Activated T-helper 1 cell treated with anti-CD3 and anti-CD28 coated beads, Interleukin-12 subunit alpha, Interleukin-12 subunit beta, Interleukin-2, Interleukin-4 antibody, amounts not matched to agents 30 ng/mL and 10 ng/mL and 1 ng/mL, durations not matched to agents 14 hours and 24 hours and 36 hours (primary cell): ENCODE measurements at regions of chr5 and their contacts with region 1.

Region 1: DNA sequence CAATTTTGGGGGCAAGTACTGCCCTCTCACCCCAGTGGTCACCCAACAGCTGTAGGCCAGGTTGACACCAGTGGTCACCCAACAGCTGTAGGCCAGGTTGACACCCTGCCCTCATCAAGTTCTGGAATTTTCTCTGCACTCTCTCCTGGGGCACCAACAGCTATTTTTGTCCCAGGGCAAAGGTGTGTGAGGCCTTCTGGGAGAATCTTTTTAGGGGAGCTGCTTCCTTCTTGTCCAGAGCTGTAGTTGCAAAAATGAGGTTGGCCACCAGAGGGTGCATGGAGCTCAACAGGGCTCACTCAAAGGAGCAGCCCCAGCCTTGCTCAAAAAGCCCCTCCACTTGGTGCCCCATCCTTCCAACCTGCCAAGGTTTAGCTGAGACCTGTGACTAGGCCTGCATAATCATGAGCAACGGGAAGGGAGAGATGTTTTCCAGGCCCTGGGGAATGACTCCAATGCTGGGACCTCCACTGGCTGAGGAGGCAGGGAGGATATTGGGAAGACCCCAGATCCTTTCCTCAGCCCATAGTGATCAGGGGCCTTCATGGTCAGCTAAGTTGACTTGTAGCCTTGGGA is 10.6 kb upstream of the P4HA2 start:
- DNase-seq: peak; percentile 59
- H3K4me3 Mint-ChIP-seq: no peak overlapping the region
- H3K27ac Mint-ChIP-seq: no peak overlapping the region
- H3K4me1 Mint-ChIP-seq: peaks cover 6% of the 10 kb centered on the region
- H3K27me3 Mint-ChIP-seq: peaks cover 4% of the 10 kb centered on the region

Region 2: GRCh38 chr5:132293066-132293991 is 55.1 kb after region 1 on chr5:
- intact Hi-C with region 1: loop called (anchors 5 kb)
- DNase-seq: peak; percentile 53
- H3K4me3 Mint-ChIP-seq: peak overlapping the region; percentile 93
- H3K27ac Mint-ChIP-seq: peak overlapping the region; percentile 75
- H3K4me1 Mint-ChIP-seq: peaks cover 30% of the 10 kb centered on the region
- H3K27me3 Mint-ChIP-seq: peaks cover 15% of the 10 kb centered on the region

Region 3: DNA sequence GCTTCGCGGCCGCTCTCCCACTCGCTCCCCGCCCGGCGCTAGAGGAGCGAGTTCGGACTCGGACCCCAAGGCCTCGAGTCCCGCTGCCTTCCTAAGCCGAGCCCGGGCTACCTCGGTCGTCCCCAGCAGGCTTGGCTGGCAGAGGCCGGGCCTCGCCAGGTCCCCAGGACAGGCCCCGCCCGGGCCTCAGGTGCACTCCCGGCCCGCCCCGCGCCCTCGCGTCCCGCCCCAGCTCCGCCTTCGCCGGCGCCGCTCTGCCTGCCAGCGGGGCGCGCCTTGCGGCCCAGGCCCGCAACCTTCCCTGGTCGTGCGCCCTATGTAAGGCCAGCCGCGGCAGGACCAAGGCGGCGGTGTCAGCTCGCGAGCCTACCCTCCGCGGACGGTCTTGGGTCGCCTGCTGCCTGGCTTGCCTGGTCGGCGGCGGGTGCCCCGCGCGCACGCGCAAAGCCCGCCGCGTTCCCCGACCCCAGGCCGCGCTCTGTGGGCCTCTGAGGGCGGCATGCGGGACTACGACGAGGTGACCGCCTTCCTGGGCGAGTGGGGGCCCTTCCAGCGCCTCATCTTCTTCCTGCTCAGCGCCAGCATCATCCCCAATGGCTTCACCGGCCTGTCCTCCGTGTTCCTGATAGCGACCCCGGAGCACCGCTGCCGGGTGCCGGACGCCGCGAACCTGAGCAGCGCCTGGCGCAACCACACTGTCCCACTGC is 131.4 kb after region 1 on chr5 and contains the start of gene SLC22A5:
- intact Hi-C with region 1: loop called (anchors 2 kb)
- DNase-seq: peak; percentile 66
- H3K4me3 Mint-ChIP-seq: peak within 1 kb of the TSS; percentile 81
- H3K27ac Mint-ChIP-seq: peak within 1 kb of the TSS; percentile 70
- H3K4me1 Mint-ChIP-seq: peaks cover 33% of the 10 kb centered on the region
- H3K27me3 Mint-ChIP-seq: no peaks in the 10 kb centered on the region
- total RNA-seq, gene SLC22A5: 4.3 and 6.2 TPM in 2 replicates

Region 4: DNA sequence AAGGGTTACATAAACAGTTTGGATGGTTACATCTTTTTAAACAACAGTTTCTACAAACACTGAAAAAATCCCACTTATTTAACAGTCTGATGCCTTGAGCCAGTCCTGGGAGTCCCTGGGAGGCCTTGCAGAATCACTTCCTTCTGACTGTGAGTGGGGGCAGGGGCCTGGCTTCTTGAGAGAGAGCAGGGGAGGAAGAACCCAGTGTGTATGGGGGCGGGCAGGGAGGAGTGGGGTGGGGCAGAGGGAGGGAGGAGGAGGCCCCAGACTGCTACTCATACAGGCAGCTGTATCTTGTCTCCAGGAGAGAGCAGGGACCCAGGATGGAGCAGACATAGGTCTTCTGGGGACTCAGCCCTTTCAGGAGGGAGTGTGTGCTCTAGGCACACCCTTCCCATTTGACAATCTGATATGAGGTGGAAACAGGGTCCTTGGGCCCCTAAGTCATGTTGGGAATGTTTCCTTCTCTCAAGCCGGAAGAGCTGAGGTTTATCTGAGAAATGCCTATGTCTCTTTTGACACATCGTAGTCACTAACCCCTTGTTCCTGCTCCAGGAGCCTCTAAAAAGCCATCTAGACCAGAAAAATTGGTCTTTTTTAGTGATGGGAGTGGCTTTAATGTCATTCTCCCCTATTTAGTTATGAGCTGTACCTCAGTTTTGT is 199.5 kb after region 1 on chr5:
- intact Hi-C with region 1: no loop called
- DNase-seq: peak; percentile 47
- H3K4me3 Mint-ChIP-seq: peak overlapping the region; percentile 67
- H3K27ac Mint-ChIP-seq: peak overlapping the region; percentile 92
- H3K4me1 Mint-ChIP-seq: peaks cover 87% of the 10 kb centered on the region
- H3K27me3 Mint-ChIP-seq: no peaks in the 10 kb centered on the region

Region 5: GRCh38 chr5:132500931-132501630 is 262.8 kb after region 1 on chr5:
- intact Hi-C with region 1: loop called (anchors 1 kb)
- DNase-seq: peak; percentile 66
- H3K4me3 Mint-ChIP-seq: no peak overlapping the region
- H3K27ac Mint-ChIP-seq: peak overlapping the region; percentile 72
- H3K4me1 Mint-ChIP-seq: peaks cover 54% of the 10 kb centered on the region
- H3K27me3 Mint-ChIP-seq: peaks cover 6% of the 10 kb centered on the region